BJ (cell line): ENCODE measurements at regions of chr1 and their contacts with region 1.

Region 1: DNA sequence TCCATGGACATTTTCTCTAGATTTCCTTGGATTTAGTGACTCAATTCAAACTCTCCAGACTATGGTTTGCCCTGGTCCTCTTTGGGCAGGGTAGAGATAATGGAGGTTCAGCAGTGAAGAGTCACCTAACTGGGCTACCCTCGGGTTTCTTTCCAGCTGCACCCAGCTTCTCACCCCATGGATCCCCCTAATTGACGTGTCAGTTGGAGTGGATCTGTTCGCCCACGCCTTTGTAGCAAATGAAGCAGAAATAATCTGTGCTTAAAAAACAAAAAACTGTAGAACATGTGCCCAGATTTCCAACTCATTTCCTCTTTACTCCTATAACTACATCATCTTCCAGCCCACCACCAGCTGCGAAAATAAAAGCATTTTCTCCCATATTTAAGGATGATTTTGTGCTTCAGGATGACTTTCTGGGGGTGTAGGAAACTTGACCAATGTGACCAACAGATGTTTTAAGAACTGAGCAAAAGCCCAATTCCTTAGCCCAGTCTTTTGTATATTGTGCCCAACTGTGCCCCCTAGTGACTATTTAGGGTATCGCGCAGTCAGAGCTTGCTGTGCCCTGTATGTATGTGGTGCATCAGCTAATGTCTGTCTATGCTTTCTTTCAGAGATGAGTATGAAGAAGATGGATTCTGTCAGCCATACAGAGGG is 66.5 kb upstream of the UBE2U start:
- DNase-seq: peak; percentile 62
- H3K4me3 ChIP-seq: no peak overlapping the region
- H3K27me3 ChIP-seq: no peaks in the 10 kb centered on the region
- CTCF ChIP-seq: peak; percentile 88

Region 2: GRCh38 chr1:63674238-63674864 is 462.5 kb before region 1 on chr1:
- CTCF ChIA-PET with region 1: interaction called, 25 read pairs
- POLR2A ChIA-PET with region 1: no interaction called
- DNase-seq: no peak
- H3K4me3 ChIP-seq: no peak overlapping the region
- H3K27me3 ChIP-seq: no peaks in the 10 kb centered on the region
- CTCF ChIP-seq: peak; percentile 87

Region 3: DNA sequence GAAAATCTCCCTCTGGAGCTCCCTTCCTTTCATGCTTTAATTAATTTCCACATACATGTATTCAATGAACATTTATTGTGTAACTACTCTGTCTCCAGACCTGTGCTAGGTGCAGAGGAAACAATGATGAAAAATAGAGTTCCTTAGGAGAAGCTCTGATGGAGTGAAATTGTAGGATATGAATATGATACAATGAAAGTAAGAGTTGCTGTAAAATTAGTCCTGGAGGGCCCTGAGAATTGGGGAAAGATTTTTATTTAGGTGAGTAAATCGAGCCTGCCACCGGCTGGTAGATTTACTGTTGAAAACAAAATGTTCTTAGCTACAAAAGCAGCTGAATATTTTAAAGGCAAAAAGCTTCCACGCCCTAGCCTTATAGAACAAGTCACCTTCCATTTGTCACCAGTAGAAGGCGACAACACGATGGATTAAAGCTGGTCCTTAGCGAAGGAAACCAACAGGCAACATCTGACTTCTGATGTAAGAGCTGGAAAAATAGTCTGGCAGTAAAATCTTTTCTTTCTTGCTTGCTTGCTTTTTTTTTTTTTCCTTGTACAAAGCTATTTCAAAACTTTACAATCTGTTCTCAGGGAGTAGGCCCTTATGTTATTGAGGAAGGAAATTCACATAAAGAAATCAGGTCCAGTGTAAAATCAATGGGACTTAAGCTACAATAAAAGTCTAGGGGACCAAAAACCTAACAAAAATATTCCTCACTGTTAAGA is 445.0 kb before region 1 on chr1:
- CTCF ChIA-PET with region 1: interaction called, 31 read pairs
- POLR2A ChIA-PET with region 1: no interaction called
- DNase-seq: peak; percentile 76
- H3K4me3 ChIP-seq: no peak overlapping the region
- H3K27me3 ChIP-seq: peaks cover 5% of the 10 kb centered on the region
- CTCF ChIP-seq: peak; percentile 77

Region 4: GRCh38 chr1:63773815-63774616 is 362.9 kb before region 1 on chr1 and contains the start of gene ROR1:
- CTCF ChIA-PET with region 1: interaction called, 13 read pairs
- POLR2A ChIA-PET with region 1: no interaction called
- DNase-seq: no peak
- H3K4me3 ChIP-seq: peak within 1 kb of the TSS; percentile 60
- H3K27me3 ChIP-seq: peaks cover 11% of the 10 kb centered on the region
- CTCF ChIP-seq: peak; percentile 87
- polyA plus RNA-seq, gene ROR1: 4.4 and 4.6 TPM in 2 replicates

Region 5: GRCh38 chr1:63917571-63918417 is 219.1 kb before region 1 on chr1:
- CTCF ChIA-PET with region 1: interaction called, 31 read pairs
- POLR2A ChIA-PET with region 1: no interaction called
- DNase-seq: no peak
- H3K4me3 ChIP-seq: no peak overlapping the region
- H3K27me3 ChIP-seq: peaks cover 16% of the 10 kb centered on the region
- CTCF ChIP-seq: no peak; the same call in 1 of the 2 replicates

Region 6: DNA sequence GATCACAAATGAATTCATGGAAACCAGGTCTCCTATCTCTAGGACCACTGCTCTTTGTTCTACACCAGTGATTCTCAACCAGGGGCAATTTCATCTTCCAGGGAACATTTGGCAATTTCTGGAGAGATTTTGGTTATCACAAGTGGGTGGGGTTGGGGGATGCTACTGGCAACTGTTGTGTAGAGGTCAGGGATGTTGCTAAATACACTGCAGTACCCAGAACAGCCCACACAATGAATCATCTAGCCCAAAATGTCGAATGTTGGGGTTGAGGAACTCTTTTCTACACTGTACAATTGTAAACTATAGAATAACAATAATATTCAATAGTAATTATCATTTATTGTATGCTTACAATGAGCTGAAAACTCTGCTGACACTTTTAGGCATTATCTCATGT is 10.9 kb after region 1 on chr1:
- CTCF ChIA-PET with region 1: interaction called, 13 read pairs
- POLR2A ChIA-PET with region 1: no interaction called
- DNase-seq: no peak
- H3K4me3 ChIP-seq: no peak overlapping the region
- H3K27me3 ChIP-seq: no peaks in the 10 kb centered on the region
- CTCF ChIP-seq: no peak

Region 7: DNA sequence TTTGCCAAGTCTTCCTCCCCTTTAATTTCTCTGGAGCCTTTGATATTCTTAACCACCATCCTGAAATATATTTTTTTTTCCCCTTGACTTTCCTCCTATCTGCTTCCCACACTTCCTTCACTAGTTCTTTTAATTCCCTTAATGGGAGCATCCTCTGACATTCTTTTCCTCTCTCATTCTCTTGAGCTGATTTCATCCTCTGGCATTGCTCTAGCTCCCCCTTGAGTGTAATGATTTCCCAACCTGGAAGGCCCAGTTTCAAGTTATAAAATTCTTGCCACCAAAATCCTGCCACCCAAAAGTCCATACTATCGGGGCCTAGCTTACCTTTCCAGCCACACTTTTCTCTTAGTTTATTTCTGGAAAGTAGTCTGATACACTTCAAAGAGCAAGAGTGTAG is 27.1 kb after region 1 on chr1:
- CTCF ChIA-PET with region 1: interaction called, 11 read pairs
- POLR2A ChIA-PET with region 1: no interaction called
- DNase-seq: no peak
- H3K4me3 ChIP-seq: no peak overlapping the region
- H3K27me3 ChIP-seq: no peaks in the 10 kb centered on the region
- CTCF ChIP-seq: peak; percentile 75